ENCODE measurements at regions of chr19 and their contacts with region 1.

Region 1: DNA sequence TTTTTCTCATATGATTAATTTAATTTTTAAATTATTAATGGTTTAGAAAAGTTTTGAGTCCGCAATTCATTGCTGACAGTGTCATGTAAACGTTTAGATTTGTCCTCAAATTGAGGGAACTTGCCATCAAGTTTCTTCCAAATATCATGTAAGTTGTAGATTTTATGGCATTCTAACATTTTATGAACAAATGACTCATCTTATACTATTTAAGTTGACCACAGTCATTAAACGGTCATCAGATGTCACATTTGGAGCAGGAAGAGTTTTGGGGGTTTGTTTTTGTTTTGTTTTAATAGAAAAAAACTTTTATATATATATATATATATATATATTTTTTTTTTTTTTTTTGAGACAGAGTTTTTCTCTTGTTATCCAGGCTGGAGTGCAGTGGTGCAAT is 4.3 kb downstream of the ZNF114 start:
- DNase-seq: no peak
- H3K27ac ChIP-seq: no peak overlapping the region
- CTCF ChIP-seq: no peak

Region 2: DNA sequence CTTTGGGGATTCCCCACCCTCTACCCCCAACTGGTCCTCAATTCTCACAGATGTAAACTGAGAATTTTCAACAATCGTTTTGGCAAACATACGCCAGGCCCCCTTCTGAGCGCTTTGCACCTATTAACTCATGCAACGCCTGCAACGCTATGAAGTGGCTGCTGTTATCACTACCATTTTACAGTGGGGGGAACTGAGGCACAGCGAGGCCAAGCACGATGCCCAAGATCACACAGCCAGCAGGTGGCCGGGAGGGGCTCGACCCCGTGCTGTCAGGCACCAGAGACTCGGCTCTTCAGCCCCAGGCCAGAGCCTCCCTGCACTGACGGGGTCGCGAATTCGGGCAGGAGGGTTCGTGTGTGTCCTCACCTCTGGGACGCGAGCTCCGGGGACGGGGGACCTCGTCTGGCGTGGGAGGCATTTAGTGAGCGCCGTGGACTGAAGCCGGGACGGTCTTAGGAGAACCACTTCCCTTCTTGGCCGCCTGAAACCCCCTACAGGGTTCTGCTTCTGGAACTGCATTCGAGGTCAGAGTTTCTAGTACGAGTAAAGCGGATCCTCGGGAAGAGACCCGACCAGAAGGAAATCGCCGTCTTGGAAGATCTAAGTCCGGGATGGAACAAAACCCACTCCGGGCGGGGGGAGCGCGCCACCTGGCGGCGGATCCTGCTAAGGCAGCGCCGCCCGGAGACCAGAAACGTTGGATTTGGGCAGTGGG is 16.8 kb after region 1 on chr19:
- CTCF ChIA-PET with region 1: interaction called, 11 read pairs
- POLR2A ChIA-PET with region 1: interaction called, 3 read pairs
- DNase-seq: peak; percentile 83
- H3K27ac ChIP-seq: no peak overlapping the region
- CTCF ChIP-seq: peak; percentile 96